ENCODE measurements at regions of chr5 and their contacts with region 1.

Region 1: GRCh38 chr5:167814828-167815227 is 476.6 kb upstream of the WWC1 start:
- DNase-seq: peak; percentile 99
- H3K4me3 ChIP-seq: no peak overlapping the region
- H3K27ac ChIP-seq: peak overlapping the region; percentile 100
- H3K4me1 ChIP-seq: peaks cover 51% of the 10 kb centered on the region
- H3K27me3 ChIP-seq: no peaks in the 10 kb centered on the region
- CTCF ChIP-seq: no peak

Region 2: DNA sequence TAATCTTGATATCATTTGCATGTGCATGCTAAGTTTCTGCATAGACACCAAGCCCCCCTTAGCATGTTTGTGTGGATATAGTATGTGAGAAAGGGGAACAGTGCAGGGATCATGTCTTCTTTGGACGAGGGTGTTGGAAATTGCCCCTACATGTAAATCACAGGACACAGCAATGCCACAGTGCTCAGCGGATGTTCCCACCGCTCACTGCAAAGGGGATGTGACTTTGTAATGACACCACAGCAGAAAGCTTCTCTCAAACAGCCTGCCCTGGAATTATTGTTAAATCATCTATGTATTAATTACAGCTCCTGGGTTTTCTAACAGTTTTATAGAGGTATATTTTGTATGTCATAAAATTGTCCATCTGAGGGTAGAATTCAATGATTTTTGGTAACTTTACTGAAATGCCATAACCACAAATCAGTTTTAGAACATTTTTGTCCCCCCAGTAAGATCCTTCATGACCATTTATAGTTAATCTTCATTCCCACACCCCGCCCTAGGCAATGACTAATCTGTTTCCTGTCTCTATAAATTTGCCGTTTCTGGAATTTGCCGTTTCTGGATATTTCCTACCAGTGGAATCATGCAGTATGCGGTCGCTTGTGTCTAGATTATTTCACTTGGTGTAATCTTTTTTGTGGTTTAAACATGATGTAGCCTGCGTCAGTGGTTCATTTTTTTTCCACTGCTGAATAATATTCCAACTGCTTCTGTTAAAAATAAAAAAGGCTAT is 171.9 kb before region 1 on chr5:
- CTCF ChIA-PET with region 1: no interaction called
- dilution Hi-C with region 1: no loop called
- in situ Hi-C with region 1: no loop called
- intact Hi-C with region 1: loop called (anchors 1 kb)
- DNase-seq: peak; percentile 83
- H3K4me3 ChIP-seq: peak overlapping the region in 1 of 3 experiments; percentile 9
- H3K27ac ChIP-seq: peak overlapping the region; percentile 91
- H3K4me1 ChIP-seq: peaks cover 43% of the 10 kb centered on the region
- H3K27me3 ChIP-seq: no peaks in the 10 kb centered on the region
- CTCF ChIP-seq: no peak

Region 3: DNA sequence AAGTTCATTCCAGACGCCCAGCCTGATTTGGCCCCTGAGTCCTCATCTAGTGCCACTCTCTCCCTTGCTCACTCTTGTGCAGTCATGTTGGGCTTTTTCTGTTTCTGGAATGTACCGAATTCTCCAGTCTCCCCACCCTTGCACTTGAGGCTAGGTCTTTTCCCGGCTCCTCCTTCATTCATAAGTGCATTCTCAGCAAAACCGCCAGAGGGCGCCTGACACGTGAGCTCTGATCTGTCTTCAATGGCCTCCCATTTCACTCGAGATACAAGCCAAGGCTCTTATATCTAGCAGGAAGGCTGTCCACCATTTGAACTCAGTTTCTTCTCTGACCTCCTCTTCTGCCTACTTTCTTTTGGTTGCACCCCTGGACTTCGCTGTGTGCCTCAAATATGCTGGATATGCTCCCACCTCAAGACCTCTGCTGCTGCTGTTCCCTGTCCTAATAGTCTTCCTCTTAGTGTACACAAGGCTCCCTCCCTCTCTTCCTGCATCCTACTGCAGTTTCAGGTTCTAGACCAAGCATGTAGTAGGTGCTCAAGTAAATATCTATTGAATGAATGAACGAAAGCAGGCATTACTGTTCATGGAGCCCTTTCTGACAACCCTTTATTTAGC is 91.5 kb before region 1 on chr5:
- CTCF ChIA-PET with region 1: no interaction called
- dilution Hi-C with region 1: no loop called
- in situ Hi-C with region 1: no loop called
- intact Hi-C with region 1: loop called (anchors 1 kb)
- DNase-seq: peak; percentile 80
- H3K4me3 ChIP-seq: no peak overlapping the region
- H3K27ac ChIP-seq: peak overlapping the region; percentile 74
- H3K4me1 ChIP-seq: peaks cover 8% of the 10 kb centered on the region
- H3K27me3 ChIP-seq: no peaks in the 10 kb centered on the region
- CTCF ChIP-seq: peak; percentile 84 to 91

Region 4: DNA sequence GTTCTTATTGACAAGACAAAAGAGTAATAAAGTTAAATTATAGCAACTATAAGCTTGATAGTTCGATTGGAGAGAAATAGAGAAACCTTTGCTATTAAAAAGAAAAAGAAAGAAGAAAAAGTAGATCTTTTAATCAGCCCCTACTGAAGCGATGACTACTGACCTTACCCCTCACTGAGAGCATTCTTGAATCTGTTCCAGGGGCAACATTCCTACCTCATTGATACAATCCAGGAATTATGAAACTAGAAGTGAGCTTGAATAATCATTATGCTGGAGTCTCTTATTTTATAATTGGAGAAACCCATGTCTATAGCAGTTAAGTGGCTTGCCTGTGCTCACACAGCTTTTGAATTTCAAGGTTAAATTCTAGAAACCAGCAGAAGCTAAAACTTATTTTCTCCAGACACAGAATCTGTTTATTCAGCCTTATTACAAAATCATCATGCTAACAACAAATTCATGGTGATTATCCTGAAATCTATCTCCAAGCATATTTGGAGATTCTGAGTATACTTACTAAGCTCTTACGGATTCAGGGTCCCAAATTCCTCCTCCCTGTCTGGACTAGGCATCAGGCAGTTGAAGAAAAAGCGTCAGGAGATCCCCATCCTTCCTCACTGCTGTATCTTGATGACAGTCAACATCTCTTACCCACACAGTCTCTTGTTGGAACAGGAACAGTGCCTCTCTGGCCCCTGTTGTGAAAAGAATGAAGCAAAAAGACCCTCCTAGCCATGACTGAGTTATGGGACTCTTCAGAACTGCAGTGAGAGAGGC is 71.0 kb before region 1 on chr5:
- CTCF ChIA-PET with region 1: no interaction called
- dilution Hi-C with region 1: no loop called
- in situ Hi-C with region 1: loop called in 1 of 2 experiments (anchors 10 kb)
- intact Hi-C with region 1: loop called (anchors 1 kb)
- DNase-seq: peak; percentile 63
- H3K4me3 ChIP-seq: no peak overlapping the region
- H3K27ac ChIP-seq: peak overlapping the region; percentile 82
- H3K4me1 ChIP-seq: peaks cover 21% of the 10 kb centered on the region
- H3K27me3 ChIP-seq: no peaks in the 10 kb centered on the region
- CTCF ChIP-seq: no peak

Region 5: DNA sequence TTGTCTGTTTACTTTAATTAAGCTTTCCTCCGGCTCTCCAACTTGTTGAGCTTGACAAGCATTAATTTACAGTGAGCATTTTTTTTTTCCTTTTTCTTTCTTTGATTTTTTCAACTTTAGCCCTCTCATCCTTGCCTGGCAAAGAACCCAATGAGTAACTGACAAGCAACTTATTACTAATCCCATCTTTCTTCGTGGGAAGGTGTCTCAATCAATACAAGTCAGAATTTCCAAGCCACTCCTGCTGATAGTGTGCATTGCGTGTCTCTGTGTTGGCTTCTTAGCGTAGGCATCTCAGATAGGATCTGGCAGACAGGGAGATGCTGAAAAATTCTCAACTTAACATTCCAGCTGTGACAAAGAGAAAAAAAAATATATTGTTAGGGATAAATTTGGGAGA is 51.1 kb before region 1 on chr5:
- CTCF ChIA-PET with region 1: interaction called, 3 read pairs
- dilution Hi-C with region 1: no loop called
- in situ Hi-C with region 1: loop called in 1 of 2 experiments (anchors 5 kb)
- intact Hi-C with region 1: loop called (anchors 1 kb)
- DNase-seq: peak; percentile 85
- H3K4me3 ChIP-seq: no peak overlapping the region
- H3K27ac ChIP-seq: peak overlapping the region; percentile 55
- H3K4me1 ChIP-seq: peaks cover 34% of the 10 kb centered on the region
- H3K27me3 ChIP-seq: no peaks in the 10 kb centered on the region
- CTCF ChIP-seq: no peak

Region 6: GRCh38 chr5:167945542-167946384 is 130.9 kb after region 1 on chr5:
- CTCF ChIA-PET with region 1: no interaction called
- dilution Hi-C with region 1: no loop called
- in situ Hi-C with region 1: loop called in 1 of 2 experiments (anchors 10 kb)
- intact Hi-C with region 1: loop called (anchors 2 kb)
- DNase-seq: peak; percentile 78
- H3K4me3 ChIP-seq: no peak overlapping the region
- H3K27ac ChIP-seq: peak overlapping the region; percentile 80
- H3K4me1 ChIP-seq: peaks cover 66% of the 10 kb centered on the region
- H3K27me3 ChIP-seq: no peaks in the 10 kb centered on the region
- CTCF ChIP-seq: no peak

Region 7: DNA sequence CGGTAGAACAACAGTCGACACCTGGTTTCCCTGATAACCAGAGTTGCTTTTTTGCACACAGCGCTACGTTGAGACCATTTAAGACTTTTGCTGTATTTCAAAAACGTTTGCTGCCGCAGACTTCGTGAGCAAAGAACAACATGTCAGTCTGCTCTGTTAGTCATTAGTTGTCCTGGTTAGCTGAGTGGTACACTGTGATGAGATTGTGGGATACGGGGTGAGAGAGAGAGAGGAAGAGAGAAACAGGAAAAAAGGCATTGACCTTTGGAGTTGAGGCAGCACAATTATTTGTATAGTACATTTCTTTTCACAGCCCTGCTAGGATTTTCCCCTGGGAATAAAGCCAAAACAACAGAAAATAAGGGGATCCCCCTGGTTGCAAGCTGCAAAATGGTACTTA is 170.5 kb after region 1 on chr5:
- CTCF ChIA-PET with region 1: no interaction called
- dilution Hi-C with region 1: no loop called
- in situ Hi-C with region 1: no loop called
- intact Hi-C with region 1: no loop called
- DNase-seq: no peak
- H3K4me3 ChIP-seq: no peak overlapping the region
- H3K27ac ChIP-seq: no peak overlapping the region
- H3K4me1 ChIP-seq: no peaks in the 10 kb centered on the region
- H3K27me3 ChIP-seq: no peaks in the 10 kb centered on the region
- CTCF ChIP-seq: no peak